Activated CD4-positive, alpha-beta memory T cell treated with anti-CD3 and anti-CD28 coated beads for 36 hours (primary cell): ENCODE measurements at regions of chr3 and their contacts with region 1.

Region 1: DNA sequence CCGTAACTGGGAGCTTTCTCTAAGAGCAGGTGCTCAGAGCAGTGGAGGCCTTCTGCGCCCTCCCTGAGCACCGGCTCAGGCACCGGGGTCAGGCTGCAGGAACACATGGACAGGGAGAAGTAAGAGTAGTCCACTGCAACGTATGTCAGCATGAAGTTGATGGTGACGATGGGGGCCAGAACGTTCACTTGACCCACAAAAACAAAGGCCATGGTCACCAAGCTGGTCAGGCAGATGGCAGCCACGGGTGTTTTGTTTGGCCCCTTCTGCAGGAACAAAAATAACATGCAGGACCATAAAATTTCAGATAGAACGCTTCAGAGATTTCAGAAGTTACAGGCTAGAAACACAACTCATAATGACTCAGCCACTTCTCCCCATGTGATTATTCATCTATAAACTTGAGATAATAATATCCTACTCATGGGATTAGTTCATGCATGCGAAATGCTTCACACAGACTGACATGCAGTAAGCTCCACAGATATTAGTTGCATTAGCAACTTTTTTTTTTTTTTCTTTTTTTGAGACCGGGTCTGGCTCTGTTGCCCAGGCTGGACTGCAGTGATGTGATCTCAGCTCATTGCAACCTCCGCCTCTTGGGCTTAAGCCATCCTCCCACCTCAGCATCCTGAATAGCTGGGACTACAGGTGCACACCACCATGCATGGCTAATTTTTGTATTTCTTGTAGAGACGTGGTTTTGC is 52.2 kb upstream of the HEG1 start:
- DNase-seq: no peak
- H3K4me3 Mint-ChIP-seq: no peak overlapping the region
- H3K27ac Mint-ChIP-seq: no peak overlapping the region
- H3K4me1 Mint-ChIP-seq: peaks cover 26% of the 10 kb centered on the region
- H3K27me3 Mint-ChIP-seq: peaks cover 23% of the 10 kb centered on the region

Region 2: GRCh38 chr3:125125821-125126245 is 17.8 kb after region 1 on chr3:
- CTCF ChIA-PET with region 1: no interaction called
- POLR2A ChIA-PET with region 1: interaction called, 6 read pairs
- intact Hi-C with region 1: loop called (anchors 1 kb)
- DNase-seq: peak; percentile 54
- H3K4me3 Mint-ChIP-seq: no peak overlapping the region
- H3K27ac Mint-ChIP-seq: no peak overlapping the region
- H3K4me1 Mint-ChIP-seq: peaks cover 20% of the 10 kb centered on the region
- H3K27me3 Mint-ChIP-seq: peaks cover 4% of the 10 kb centered on the region

Region 3: DNA sequence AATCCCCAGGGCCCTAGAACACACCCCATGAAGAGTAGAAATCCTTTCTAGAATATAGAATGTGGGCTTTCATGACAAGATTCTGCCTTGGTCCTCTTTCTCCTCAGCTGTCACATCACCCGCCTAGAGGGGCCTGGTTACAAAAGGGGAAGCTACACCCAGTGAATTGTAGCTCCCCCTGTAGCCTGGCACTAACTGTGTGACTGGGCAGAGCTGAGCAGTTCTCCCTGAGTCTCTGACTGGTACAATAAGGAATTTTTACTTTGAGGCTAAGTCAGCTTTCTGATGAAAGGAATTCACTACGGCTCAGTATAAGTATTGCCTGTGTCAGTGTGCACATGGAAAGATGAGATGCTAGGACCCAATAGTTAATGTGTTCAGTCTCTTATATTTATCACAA is 295.8 kb after region 1 on chr3:
- CTCF ChIA-PET with region 1: no interaction called
- POLR2A ChIA-PET with region 1: no interaction called
- intact Hi-C with region 1: no loop called
- DNase-seq: no peak
- H3K4me3 Mint-ChIP-seq: no peak overlapping the region
- H3K27ac Mint-ChIP-seq: no peak overlapping the region
- H3K4me1 Mint-ChIP-seq: no peaks in the 10 kb centered on the region
- H3K27me3 Mint-ChIP-seq: peaks cover 3% of the 10 kb centered on the region